H1 (cell line): ENCODE measurements at regions of chr7 and their contacts with region 1.

Region 1: DNA sequence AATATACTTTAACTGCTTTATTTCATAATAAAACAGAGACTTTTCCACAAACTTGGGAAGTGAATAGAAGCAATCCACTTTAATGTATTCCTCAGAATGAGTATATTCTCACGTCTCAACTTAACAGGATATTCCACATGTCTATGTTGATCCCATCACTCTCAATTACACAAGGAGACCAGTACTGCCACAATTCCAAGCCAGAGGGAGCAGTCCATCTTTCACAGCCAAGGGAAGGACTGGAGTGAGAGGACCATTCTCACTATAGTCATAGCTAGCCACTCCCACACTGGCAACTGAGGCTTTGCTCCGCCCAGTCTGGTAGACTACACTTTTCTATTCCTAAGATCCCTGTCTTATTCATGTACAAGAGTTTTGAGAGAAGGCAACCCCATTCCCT is 553.9 kb downstream of the CNTNAP2 start:
- DNase-seq: no peak
- H3K4me3 ChIP-seq: no peak overlapping the region
- H3K27ac ChIP-seq: no peak overlapping the region
- H3K4me1 ChIP-seq: no peaks in the 10 kb centered on the region
- H3K27me3 ChIP-seq: no peaks in the 10 kb centered on the region
- CTCF ChIP-seq: peak in 1 of 3 experiments; percentile 35; a peak in 1 of 4 replicates
- EP300 ChIP-seq: no peak
- POLR2A ChIP-seq: no peak
- RAD21 ChIP-seq: peak; percentile 34 to 48

Region 2: DNA sequence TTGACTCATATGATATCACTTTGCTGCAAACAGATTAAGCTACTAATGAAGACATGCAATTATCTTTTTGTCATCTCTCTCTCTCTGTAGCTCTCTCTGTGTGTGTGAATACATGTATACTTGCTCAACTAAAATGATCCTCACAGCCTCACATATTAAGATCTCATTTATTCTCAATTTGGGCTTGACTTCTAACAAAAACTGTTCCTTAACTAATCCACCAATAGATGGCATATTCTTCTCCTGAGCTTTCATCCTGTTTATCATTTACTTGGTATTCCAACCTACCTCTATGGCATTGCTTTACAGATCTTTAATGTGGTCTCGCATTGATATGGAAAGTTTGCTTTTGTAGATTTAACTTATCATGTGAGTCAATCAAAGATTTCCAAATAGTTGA is 13.5 kb before region 1 on chr7:
- CTCF ChIA-PET with region 1: interaction called, 11 read pairs
- POLR2A ChIA-PET with region 1: no interaction called
- DNase-seq: no peak
- H3K4me3 ChIP-seq: no peak overlapping the region
- H3K27ac ChIP-seq: no peak overlapping the region
- H3K4me1 ChIP-seq: no peaks in the 10 kb centered on the region
- H3K27me3 ChIP-seq: no peaks in the 10 kb centered on the region
- CTCF ChIP-seq: peak in 1 of 3 experiments; percentile 25; a peak in 1 of 4 replicates
- EP300 ChIP-seq: no peak
- POLR2A ChIP-seq: no peak
- RAD21 ChIP-seq: peak; percentile 8 to 19; a peak in 1 of 4 replicates